ENCODE measurements at regions of chr4 and their contacts with region 1.

Region 1: GRCh38 chr4:76993787-76994641 is 44.5 kb downstream of the SEPTIN11 start:
- DNase-seq: peak; percentile 54
- H3K4me3 Mint-ChIP-seq: peak overlapping the region; percentile 63
- H3K27ac Mint-ChIP-seq: peak overlapping the region; percentile 70
- H3K4me1 Mint-ChIP-seq: peaks cover 48% of the 10 kb centered on the region
- H3K27me3 Mint-ChIP-seq: peaks cover 7% of the 10 kb centered on the region

Region 2: DNA sequence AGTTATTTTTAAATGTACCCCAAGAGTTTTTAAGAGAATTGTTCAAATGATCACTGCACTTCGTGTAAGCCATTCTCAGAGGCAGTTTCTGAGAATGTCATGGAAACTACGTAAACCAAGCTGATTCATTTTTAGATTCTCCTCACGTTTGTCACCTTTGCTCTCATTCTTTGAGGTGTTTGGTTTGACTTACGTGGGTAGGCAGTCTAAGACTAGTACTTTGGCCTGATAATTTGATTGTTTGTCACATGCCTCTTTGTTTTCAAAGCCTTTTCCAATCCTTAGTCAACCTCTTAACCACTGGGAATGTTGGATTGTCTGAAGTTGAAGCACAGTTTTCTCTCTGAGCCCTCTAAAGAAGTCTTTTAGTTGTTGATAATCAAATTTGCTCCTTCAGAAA is 34.0 kb before region 1 on chr4:
- intact Hi-C with region 1: loop called (anchors 1 kb)
- DNase-seq: no peak
- H3K4me3 Mint-ChIP-seq: no peak overlapping the region
- H3K27ac Mint-ChIP-seq: no peak overlapping the region
- H3K4me1 Mint-ChIP-seq: peaks cover 18% of the 10 kb centered on the region
- H3K27me3 Mint-ChIP-seq: peaks cover 50% of the 10 kb centered on the region

Region 3: GRCh38 chr4:77007358-77008191 is 13.6 kb after region 1 on chr4:
- intact Hi-C with region 1: loop called (anchors 1 kb)
- DNase-seq: no peak
- H3K4me3 Mint-ChIP-seq: peak overlapping the region; percentile 27
- H3K27ac Mint-ChIP-seq: peak overlapping the region; percentile 8
- H3K4me1 Mint-ChIP-seq: peaks cover 44% of the 10 kb centered on the region
- H3K27me3 Mint-ChIP-seq: peaks cover 16% of the 10 kb centered on the region

Region 4: DNA sequence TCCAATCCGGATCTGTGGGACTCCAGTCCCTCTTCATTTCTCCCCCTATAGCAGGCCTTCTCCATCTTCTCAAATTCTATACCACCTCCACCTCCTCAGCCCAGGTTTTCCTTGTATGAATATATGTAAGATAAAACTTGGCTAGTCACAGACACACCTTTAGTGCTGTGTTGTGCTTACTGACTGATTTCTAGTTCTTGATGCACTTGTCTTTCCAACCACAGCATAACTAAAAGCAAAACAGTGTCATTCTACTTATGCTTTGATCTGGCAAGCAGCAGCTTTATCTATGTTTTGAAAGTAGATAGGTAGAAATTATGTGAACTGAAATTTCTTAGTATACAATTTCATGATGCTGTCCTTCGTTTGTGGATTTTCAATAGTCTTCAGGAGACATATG is 34.2 kb after region 1 on chr4:
- intact Hi-C with region 1: loop called (anchors 1 kb)
- DNase-seq: no peak
- H3K4me3 Mint-ChIP-seq: peak overlapping the region; percentile 35
- H3K27ac Mint-ChIP-seq: peak overlapping the region; percentile 71
- H3K4me1 Mint-ChIP-seq: peaks cover 51% of the 10 kb centered on the region
- H3K27me3 Mint-ChIP-seq: peaks cover 4% of the 10 kb centered on the region

Measured in activated T-helper 1 cell treated with anti-CD3 and anti-CD28 coated beads, Interleukin-12 subunit alpha, Interleukin-12 subunit beta, Interleukin-2, Interleukin-4 antibody, amounts not matched to agents 30 ng/mL and 10 ng/mL and 1 ng/mL, durations not matched to agents 14 hours and 24 hours and 36 hours (primary cell).